K562 (cell line): ENCODE measurements at regions of chr15 and their contacts with region 1.

Region 1: DNA sequence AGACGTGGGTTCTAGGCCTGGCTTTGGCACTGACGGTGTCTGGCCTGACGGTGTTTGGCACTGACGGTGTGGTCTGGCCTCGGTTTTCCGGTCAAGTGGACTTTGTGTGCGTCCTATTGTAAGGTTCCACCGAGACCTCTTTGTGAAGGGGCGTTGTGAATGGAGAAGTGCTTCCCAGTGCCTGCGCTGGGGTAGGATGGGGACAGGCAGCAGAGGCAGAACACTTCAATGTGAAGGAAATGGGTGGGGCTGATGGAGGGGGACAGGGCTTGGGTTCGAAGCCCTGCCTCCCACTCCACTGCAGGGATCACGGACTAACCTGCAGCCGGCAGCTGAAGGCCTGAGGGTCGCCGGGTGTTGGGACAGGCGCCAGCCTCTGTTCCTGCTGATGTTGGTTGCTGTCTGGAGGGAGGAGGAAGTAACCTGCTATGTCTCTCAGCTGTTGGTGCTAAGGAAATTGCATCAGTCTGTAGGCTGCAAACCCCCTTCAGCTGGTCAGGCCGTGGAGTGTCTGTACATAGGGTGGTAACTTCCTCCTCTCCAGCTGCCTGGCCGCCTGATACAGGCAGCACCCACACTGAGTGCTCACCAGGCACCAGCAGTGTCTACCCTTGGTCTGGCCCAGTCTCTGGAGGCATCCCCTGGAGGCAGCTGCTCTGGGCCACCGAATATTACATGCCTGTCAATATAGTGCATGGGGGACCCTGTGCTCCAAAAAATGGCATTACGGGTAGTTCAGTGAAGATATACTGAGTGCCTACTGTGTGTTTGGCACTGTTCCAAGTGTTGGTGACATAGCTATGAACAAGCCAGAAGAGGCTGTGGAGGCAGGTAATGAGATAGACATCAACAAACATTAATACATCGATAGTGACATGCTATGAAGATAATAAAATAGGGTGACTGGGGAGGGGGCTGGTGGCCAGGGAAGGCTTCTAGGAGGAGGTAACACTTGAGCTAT is 1.1 kb downstream of the TM6SF1 start:
- DNase-seq: peak in 1 of 4 experiments; percentile 46
- ATAC-seq: peak; percentile 81
- H3K4me3 ChIP-seq: peak overlapping the region; percentile 51
- H3K27ac ChIP-seq: no peak overlapping the region; the same call in 2 of the 3 replicates
- H3K4me1 ChIP-seq: peaks cover 18 to 24% of the 10 kb centered on the region in 2 experiments; a peak in 4 of 5 replicates
- H3K27me3 ChIP-seq: no peaks in the 10 kb centered on the region; a peak in 1 of 5 replicates
- CTCF ChIP-seq: no peak
- EP300 ChIP-seq: peak; percentile 53; the same call in 1 of the 2 replicates
- POLR2A ChIP-seq: no peak
- RAD21 ChIP-seq: peak; percentile 22 to 23; a peak in 1 of 4 replicates

Region 2: DNA sequence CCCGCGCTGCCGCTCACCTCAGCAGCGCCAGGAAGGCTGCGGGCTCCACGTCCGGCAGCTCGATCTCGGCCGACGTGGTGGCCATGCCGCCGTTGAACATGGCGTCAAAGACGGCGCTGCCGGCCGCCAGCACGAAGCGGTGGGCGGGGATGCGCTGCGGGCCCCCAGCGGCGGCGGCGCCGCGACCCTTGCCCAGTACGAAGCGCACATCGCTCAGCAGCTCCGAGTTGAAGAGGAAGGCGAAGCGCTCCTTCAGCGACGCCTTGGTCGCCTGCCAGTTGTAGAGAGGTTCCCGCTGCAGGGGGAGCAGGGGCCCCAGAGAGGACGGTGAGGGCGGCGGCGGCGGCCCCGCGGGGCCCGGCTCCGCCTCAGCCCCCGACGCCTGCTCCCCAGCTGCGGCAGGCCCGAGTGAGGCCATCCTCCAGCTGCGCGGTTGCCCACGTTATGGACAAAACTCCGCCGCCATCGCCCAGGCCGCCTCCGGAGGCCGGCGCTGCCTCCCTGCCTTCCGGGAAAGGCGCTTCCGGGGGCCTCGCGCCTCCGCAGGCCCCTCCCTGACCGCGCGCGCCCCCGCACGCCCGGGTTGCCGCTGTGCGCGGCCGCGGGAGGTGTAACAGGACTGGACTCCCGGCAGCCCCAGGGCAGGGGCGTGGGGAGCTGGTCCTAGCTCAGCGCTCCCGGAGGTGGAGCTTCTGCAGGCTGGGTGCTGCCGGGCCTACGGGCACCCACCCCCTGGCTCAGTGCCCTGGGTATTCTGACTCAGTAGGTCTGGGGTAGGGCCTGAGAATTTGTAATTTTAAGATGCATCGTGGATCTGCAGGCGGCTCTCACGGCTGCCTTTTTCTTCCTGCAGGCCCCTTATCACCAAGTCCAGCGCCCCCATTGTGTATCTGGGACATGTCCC is 41.6 kb before region 1 on chr15 and contains the start of gene BTBD1:
- CTCF ChIA-PET with region 1: no interaction called
- POLR2A ChIA-PET with region 1: interaction called, 6 read pairs
- in situ Hi-C with region 1: no loop called
- intact Hi-C with region 1: loop called (anchors 2 kb)
- DNase-seq: peak; percentile 94 to 97 (median 96)
- ATAC-seq: peak; percentile 95
- H3K4me3 ChIP-seq: peak within 1 kb of the TSS; percentile 90
- H3K27ac ChIP-seq: peak within 1 kb of the TSS; percentile 92
- H3K4me1 ChIP-seq: peaks cover 9 to 29% of the 10 kb centered on the region in 2 experiments
- H3K27me3 ChIP-seq: no peaks in the 10 kb centered on the region
- CTCF ChIP-seq: peak in 2 of 3 experiments; percentile 10 to 33; a peak in 3 of 6 replicates
- EP300 ChIP-seq: no peak
- POLR2A ChIP-seq: peak; percentile 94
- RAD21 ChIP-seq: no peak; a peak in 2 of 4 replicates
- polyA plus RNA-seq, gene BTBD1: 19.4 to 27.2 TPM

Region 3: GRCh38 chr15:83092309-83092976 is 16.1 kb before region 1 on chr15:
- CTCF ChIA-PET with region 1: no interaction called
- POLR2A ChIA-PET with region 1: interaction called, 5 read pairs
- in situ Hi-C with region 1: no loop called
- intact Hi-C with region 1: loop called (anchors 2 kb)
- DNase-seq: peak; percentile 52 to 96 (median 74)
- ATAC-seq: peak; percentile 98
- H3K4me3 ChIP-seq: no peak overlapping the region
- H3K27ac ChIP-seq: peak overlapping the region; percentile 87
- H3K4me1 ChIP-seq: peaks cover 6 to 23% of the 10 kb centered on the region in 2 experiments; a peak in 4 of 5 replicates
- H3K27me3 ChIP-seq: no peaks in the 10 kb centered on the region
- CTCF ChIP-seq: no peak
- EP300 ChIP-seq: peak; percentile 96
- POLR2A ChIP-seq: peak; percentile 68
- RAD21 ChIP-seq: peak in 1 of 2 experiments; percentile 19; a peak in 2 of 4 replicates

Region 4: GRCh38 chr15:83207622-83208411 is 99.3 kb after region 1 on chr15 and contains the start of gene HDGFL3:
- CTCF ChIA-PET with region 1: no interaction called
- POLR2A ChIA-PET with region 1: no interaction called
- in situ Hi-C with region 1: no loop called
- intact Hi-C with region 1: loop called (anchors 5 kb)
- DNase-seq: peak in 3 of 4 experiments; percentile 60 to 62 (median 62)
- ATAC-seq: peak; percentile 65
- H3K4me3 ChIP-seq: peak within 1 kb of the TSS; percentile 69
- H3K27ac ChIP-seq: peak within 1 kb of the TSS; percentile 68
- H3K4me1 ChIP-seq: peaks cover 14 to 18% of the 10 kb centered on the region in 2 experiments
- H3K27me3 ChIP-seq: peaks cover 2 to 6% of the 10 kb centered on the region in 2 experiments; a peak in 3 of 5 replicates
- CTCF ChIP-seq: peak in 2 of 3 experiments; percentile 40 to 41; a peak in 3 of 6 replicates
- EP300 ChIP-seq: no peak
- POLR2A ChIP-seq: 0 out of 2 replicates have a peak, but pooled peaks have one; percentile 31
- RAD21 ChIP-seq: peak; percentile 51 to 60
- polyA plus RNA-seq, gene HDGFL3: 6.7 to 7.5 TPM